PC-3 (cell line): ENCODE measurements at regions of chr12 and their contacts with region 1.

Region 1: GRCh38 chr12:121888478-121889266 is at the start of gene PSMD9:
- DNase-seq: peak; percentile 99
- ATAC-seq: peak; percentile 90
- H3K4me3 ChIP-seq: peak within 1 kb of the TSS; percentile 90
- H3K27ac ChIP-seq: peak within 1 kb of the TSS; percentile 81
- H3K4me1 ChIP-seq: peaks cover 26% of the 10 kb centered on the region
- H3K27me3 ChIP-seq: no peaks in the 10 kb centered on the region
- CTCF ChIP-seq: peak; percentile 73
- total RNA-seq, gene PSMD9: 241 and 258 TPM in 2 replicates

Region 2: GRCh38 chr12:121688966-121689365 is 199.7 kb before region 1 on chr12:
- CTCF ChIA-PET with region 1: no interaction called
- POLR2A ChIA-PET with region 1: no interaction called
- intact Hi-C with region 1: loop called (anchors 5 kb)
- DNase-seq: no peak
- ATAC-seq: no peak
- H3K4me3 ChIP-seq: no peak overlapping the region
- H3K27ac ChIP-seq: no peak overlapping the region
- H3K4me1 ChIP-seq: no peaks in the 10 kb centered on the region
- H3K27me3 ChIP-seq: no peaks in the 10 kb centered on the region
- CTCF ChIP-seq: no peak

Region 3: GRCh38 chr12:121811434-121812319 is 77.0 kb before region 1 on chr12:
- CTCF ChIA-PET with region 1: no interaction called
- POLR2A ChIA-PET with region 1: no interaction called
- intact Hi-C with region 1: loop called (anchors 2 kb)
- DNase-seq: peak; percentile 84
- ATAC-seq: peak; percentile 79
- H3K4me3 ChIP-seq: peak overlapping the region; percentile 70
- H3K27ac ChIP-seq: peak overlapping the region; percentile 19
- H3K4me1 ChIP-seq: peaks cover 34% of the 10 kb centered on the region
- H3K27me3 ChIP-seq: no peaks in the 10 kb centered on the region
- CTCF ChIP-seq: peak; percentile 97

Region 4: GRCh38 chr12:121839106-121839992 is 49.3 kb before region 1 on chr12:
- CTCF ChIA-PET with region 1: interaction called, 8 read pairs
- POLR2A ChIA-PET with region 1: no interaction called
- intact Hi-C with region 1: loop called (anchors 1 kb)
- DNase-seq: peak; percentile 100
- ATAC-seq: peak; percentile 96
- H3K4me3 ChIP-seq: peak overlapping the region; percentile 79
- H3K27ac ChIP-seq: peak overlapping the region; percentile 12; the same call in 1 of the 2 replicates
- H3K4me1 ChIP-seq: 0 out of 2 replicates have a peak, but pooled peaks cover 4% of the 10 kb centered on the region
- H3K27me3 ChIP-seq: no peaks in the 10 kb centered on the region
- CTCF ChIP-seq: no peak; the same call in 1 of the 2 replicates

Region 5: DNA sequence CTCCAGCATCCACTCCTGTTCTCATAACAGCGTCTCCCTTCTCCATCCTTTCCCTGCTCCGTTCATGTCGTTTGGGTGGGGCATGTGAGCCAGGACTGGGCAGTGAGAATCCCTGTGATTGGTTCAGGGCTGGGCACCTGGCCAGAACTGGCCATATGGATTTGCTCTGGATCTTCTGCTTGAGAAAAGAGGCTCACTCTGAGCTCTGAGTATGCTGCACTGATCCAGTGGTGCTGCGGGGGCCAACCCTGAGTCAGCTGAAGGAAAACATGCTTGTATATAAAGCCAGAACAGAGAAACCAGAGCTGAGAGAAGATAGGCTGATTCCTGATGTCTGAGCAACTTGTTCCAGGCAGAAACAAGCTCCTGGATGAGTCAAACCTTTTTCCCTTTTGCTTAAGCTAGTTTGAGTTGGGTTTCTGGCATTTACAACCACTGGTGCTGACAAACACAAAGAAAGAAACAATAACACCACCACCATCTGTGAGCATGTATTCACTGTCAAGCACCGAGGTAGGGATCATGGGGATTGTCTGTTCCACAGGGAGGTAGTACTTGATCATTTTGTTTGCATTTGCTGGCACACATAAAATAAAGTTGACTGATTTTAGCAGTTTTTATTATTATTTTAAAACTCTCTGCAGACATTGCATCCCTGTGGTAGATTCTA is 16.0 kb before region 1 on chr12:
- CTCF ChIA-PET with region 1: no interaction called
- POLR2A ChIA-PET with region 1: interaction called, 28 read pairs
- intact Hi-C with region 1: no loop called
- DNase-seq: peak; percentile 36
- ATAC-seq: peak; percentile 33
- H3K4me3 ChIP-seq: no peak overlapping the region
- H3K27ac ChIP-seq: no peak overlapping the region
- H3K4me1 ChIP-seq: peaks cover 2% of the 10 kb centered on the region; the same call in 1 of the 2 replicates
- H3K27me3 ChIP-seq: no peaks in the 10 kb centered on the region
- CTCF ChIP-seq: no peak

Region 6: GRCh38 chr12:122003651-122004611 is 115.3 kb after region 1 on chr12:
- CTCF ChIA-PET with region 1: no interaction called
- POLR2A ChIA-PET with region 1: no interaction called
- intact Hi-C with region 1: no loop called
- DNase-seq: no peak
- ATAC-seq: no peak
- H3K4me3 ChIP-seq: no peak overlapping the region
- H3K27ac ChIP-seq: no peak overlapping the region
- H3K4me1 ChIP-seq: no peaks in the 10 kb centered on the region
- H3K27me3 ChIP-seq: no peaks in the 10 kb centered on the region
- CTCF ChIP-seq: no peak